AG04450 (cell line): ENCODE measurements at regions of chr4 and their contacts with region 1.

Region 1: DNA sequence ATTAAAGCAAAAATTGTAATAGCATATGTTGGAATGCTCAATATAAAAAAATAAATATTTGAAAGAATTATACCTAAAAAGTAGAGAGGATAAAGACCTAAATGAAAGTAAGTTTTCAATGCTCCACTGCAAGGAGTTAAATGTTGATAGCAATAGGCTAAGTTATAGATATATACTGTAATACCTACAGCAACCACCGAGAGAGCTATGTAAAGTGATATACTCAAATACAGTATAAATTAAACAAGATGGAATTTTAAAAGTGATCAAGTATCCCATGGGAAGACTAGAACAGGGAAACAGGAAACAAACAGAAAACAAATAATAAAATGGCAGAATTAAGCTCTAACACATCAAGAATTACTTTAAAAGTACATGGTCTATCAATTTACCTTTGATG is 73.9 kb downstream of the CASP3 start:
- DNase-seq: no peak
- H3K4me3 ChIP-seq: no peak overlapping the region
- H3K27ac ChIP-seq: no peak overlapping the region
- H3K27me3 ChIP-seq: peaks cover 1% of the 10 kb centered on the region
- CTCF ChIP-seq: no peak

Region 2: GRCh38 chr4:184510401-184510800 is 64.9 kb before region 1 on chr4:
- CTCF ChIA-PET with region 1: no interaction called
- POLR2A ChIA-PET with region 1: no interaction called
- DNase-seq: no peak
- H3K4me3 ChIP-seq: no peak overlapping the region
- H3K27ac ChIP-seq: no peak overlapping the region
- H3K27me3 ChIP-seq: no peaks in the 10 kb centered on the region
- CTCF ChIP-seq: no peak

Region 3: GRCh38 chr4:184940525-184940924 is 365.2 kb after region 1 on chr4:
- CTCF ChIA-PET with region 1: interaction called, 10 read pairs
- POLR2A ChIA-PET with region 1: no interaction called
- DNase-seq: no peak
- H3K4me3 ChIP-seq: no peak overlapping the region
- H3K27ac ChIP-seq: no peak overlapping the region
- H3K27me3 ChIP-seq: no peaks in the 10 kb centered on the region
- CTCF ChIP-seq: no peak